B cell (primary cell): ENCODE measurements at regions of chrX and their contacts with region 1.

Region 1: DNA sequence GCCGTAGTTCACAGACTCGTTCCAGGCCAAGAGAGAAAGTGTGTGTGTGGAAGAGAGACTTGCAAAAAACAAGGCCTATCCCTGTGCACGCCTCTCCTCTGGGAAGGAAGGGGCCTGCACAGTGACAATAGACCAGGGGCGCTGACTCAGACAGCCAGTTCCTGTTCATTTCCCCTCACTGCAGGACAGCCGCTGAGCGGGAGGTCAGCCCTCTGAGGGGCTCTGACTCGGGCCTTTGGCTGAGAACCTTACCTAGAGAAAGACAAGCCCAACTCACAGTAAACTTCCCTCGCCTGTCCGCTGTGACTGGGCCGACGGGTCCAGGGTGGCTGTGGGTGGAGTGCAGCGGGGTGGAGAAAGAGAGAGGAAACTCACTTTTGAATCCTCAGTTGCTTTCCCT is 52.1 kb downstream of the RTL5 start:
- DNase-seq: no peak
- ATAC-seq: no peak
- H3K4me3 ChIP-seq: no peak overlapping the region
- H3K4me3 Mint-ChIP-seq: no peak overlapping the region
- H3K27ac ChIP-seq: no peak overlapping the region
- H3K27ac Mint-ChIP-seq: no peak overlapping the region
- H3K4me1 ChIP-seq: no peaks in the 10 kb centered on the region
- H3K4me1 Mint-ChIP-seq: peaks cover 4% of the 10 kb centered on the region
- H3K27me3 ChIP-seq: peaks cover 0 to 5% (median 0%) of the 10 kb centered on the region in 4 experiments
- H3K27me3 Mint-ChIP-seq: peaks cover 12% of the 10 kb centered on the region
- CTCF ChIP-seq: no peak

Region 2: DNA sequence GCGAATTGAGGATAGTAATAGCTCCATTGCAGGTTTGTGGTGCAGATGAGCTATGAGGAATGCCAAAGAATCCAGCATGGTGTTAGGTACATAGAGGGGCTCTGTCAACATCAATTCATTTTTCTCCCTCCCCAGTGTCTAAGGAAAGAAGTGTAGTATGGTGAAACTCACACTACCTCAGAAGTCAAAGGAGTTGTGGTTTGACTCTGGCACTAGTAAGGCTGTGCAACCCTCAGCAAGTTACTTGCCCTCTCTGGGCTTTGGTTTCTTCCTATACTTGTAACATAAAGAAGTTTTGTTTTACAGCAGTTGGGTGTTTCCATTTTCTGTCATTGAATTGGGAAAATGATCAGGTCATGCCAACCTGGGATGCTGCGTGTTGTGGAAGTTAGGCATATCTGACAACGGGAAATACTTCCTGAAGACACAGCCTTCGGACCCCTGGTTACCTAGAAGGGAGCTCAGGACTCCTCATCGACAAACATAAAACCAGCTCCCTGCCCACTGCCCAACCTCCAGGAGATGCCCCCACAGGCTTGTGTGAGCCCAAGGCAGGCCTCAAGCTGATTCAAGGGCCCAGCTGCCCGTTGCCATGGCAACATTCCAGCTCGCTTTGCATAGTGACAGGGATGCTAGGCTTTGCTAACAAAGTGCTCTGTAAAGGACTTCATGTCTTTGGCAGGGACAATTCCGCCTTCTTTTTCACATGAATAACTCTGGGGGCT is 19.2 kb before region 1 on chrX:
- CTCF ChIA-PET with region 1: no interaction called
- POLR2A ChIA-PET with region 1: no interaction called
- intact Hi-C with region 1: no loop called
- DNase-seq: peak; percentile 8
- ATAC-seq: no peak
- H3K4me3 ChIP-seq: no peak overlapping the region
- H3K4me3 Mint-ChIP-seq: no peak overlapping the region
- H3K27ac ChIP-seq: no peak overlapping the region
- H3K27ac Mint-ChIP-seq: no peak overlapping the region
- H3K4me1 ChIP-seq: no peaks in the 10 kb centered on the region
- H3K4me1 Mint-ChIP-seq: no peaks in the 10 kb centered on the region
- H3K27me3 ChIP-seq: peaks cover 0 to 3% (median 0%) of the 10 kb centered on the region in 4 experiments
- H3K27me3 Mint-ChIP-seq: peaks cover 12% of the 10 kb centered on the region
- CTCF ChIP-seq: no peak

Region 3: DNA sequence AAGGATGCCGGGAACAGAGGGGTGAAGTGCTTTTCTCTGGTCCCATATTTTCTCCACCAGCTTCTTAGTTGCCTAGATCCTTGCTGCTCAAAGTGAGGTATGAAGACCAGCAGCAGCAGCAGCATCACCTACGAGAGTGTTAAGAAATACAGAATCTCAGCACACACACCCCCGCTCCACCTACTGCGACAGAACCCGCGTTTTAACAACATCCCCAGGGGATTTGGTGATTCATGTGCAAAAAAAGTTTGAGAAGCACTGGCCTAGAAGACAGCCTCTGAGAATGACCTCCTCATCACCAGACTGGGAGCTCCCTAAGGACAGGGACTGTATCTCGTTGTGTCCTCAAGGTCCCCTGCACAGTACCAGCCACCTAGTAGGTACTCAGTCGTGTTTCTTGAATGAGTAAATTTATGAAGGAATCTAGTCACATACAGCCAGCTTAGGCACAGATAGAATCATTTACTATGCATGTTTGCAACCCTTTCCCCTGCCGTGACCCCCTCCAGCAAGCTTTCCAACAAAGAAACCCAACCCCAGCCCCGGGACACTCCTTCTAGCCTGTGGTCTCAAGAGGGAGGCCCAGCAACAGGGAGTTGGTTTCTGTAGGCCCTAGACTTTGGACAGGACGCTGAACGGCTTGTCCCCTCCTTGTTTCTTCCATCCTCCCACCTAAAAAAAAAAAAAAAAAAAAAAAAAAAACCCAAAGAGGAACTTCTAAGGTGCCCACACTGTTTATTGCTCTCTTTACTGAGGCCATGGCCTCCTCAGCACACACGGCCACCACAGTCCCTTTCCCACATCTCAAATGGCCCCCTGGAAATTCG is 30.7 kb after region 1 on chrX:
- CTCF ChIA-PET with region 1: no interaction called
- POLR2A ChIA-PET with region 1: interaction called, 12 read pairs
- intact Hi-C with region 1: no loop called
- DNase-seq: no peak
- ATAC-seq: peak; percentile 52
- H3K4me3 ChIP-seq: no peak overlapping the region
- H3K4me3 Mint-ChIP-seq: no peak overlapping the region
- H3K27ac ChIP-seq: no peak overlapping the region
- H3K27ac Mint-ChIP-seq: peak overlapping the region; percentile 37
- H3K4me1 ChIP-seq: peaks cover 0 to 13% of the 10 kb centered on the region in 2 donors
- H3K4me1 Mint-ChIP-seq: peaks cover 23% of the 10 kb centered on the region
- H3K27me3 ChIP-seq: peaks cover 0 to 3% (median 0%) of the 10 kb centered on the region in 4 experiments
- H3K27me3 Mint-ChIP-seq: peaks cover 23% of the 10 kb centered on the region
- CTCF ChIP-seq: no peak

Region 4: GRCh38 chrX:72208126-72208800 is 128.7 kb after region 1 on chrX:
- CTCF ChIA-PET with region 1: no interaction called
- POLR2A ChIA-PET with region 1: no interaction called
- intact Hi-C with region 1: no loop called
- DNase-seq: no peak
- ATAC-seq: no peak
- H3K4me3 ChIP-seq: no peak overlapping the region
- H3K4me3 Mint-ChIP-seq: no peak overlapping the region
- H3K27ac ChIP-seq: no peak overlapping the region
- H3K27ac Mint-ChIP-seq: no peak overlapping the region
- H3K4me1 ChIP-seq: no peaks in the 10 kb centered on the region
- H3K4me1 Mint-ChIP-seq: no peaks in the 10 kb centered on the region
- H3K27me3 ChIP-seq: no peaks in the 10 kb centered on the region
- H3K27me3 Mint-ChIP-seq: no peaks in the 10 kb centered on the region
- CTCF ChIP-seq: no peak

Region 5: DNA sequence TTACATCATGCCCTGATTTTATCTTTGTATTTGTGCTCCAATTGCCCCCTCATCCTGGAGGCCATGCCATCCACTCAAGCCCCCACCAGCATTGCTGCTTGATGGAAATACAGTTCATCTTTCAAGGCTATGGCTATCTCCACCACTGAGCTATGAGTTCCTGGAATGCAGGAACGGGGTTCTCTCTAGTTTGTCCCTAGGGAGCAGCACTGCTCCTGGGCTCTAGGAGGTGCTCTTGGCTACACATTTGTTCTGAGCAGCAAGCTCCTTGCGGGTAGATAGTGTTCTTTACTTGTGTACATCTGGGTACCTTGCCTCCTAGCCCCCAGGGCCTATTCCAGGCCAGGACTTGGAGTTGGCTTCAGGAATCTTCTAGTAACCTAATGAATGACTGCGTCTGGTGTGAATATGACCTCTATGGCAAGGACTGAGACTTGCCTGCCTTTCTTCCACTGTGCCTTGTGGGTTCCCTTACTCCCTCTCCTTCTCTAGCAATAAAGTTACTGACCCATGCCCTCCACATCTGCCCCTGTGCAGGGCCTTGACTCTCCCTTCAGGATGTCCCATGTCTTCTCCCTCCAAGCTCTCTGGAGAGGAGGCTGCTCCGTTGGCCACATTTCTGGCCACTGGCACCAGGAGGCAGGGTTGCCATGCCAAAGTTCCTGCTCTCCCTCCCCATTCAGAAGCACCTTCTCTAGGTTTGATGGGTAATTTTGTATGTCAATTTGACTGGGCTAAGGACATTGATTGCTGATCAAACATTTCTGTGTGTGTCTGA is 218.5 kb after region 1 on chrX:
- CTCF ChIA-PET with region 1: no interaction called
- POLR2A ChIA-PET with region 1: no interaction called
- intact Hi-C with region 1: no loop called
- DNase-seq: no peak
- ATAC-seq: no peak
- H3K4me3 ChIP-seq: no peak overlapping the region
- H3K4me3 Mint-ChIP-seq: no peak overlapping the region
- H3K27ac ChIP-seq: no peak overlapping the region
- H3K27ac Mint-ChIP-seq: no peak overlapping the region
- H3K4me1 ChIP-seq: no peaks in the 10 kb centered on the region
- H3K4me1 Mint-ChIP-seq: no peaks in the 10 kb centered on the region
- H3K27me3 ChIP-seq: peaks cover 0 to 12% (median 4%) of the 10 kb centered on the region in 4 experiments
- H3K27me3 Mint-ChIP-seq: peaks cover 44% of the 10 kb centered on the region
- CTCF ChIP-seq: no peak